ENCODE measurements at regions of chr6 and their contacts with region 1.

Region 1: GRCh38 chr6:1424306-1424928 is 35.0 kb downstream of the FOXF2 start:
- H3K4me3 ChIP-seq: no peak overlapping the region
- H3K27ac ChIP-seq: no peak overlapping the region; the same call in 1 of the 2 replicates
- H3K4me1 ChIP-seq: no peaks in the 10 kb centered on the region
- CTCF ChIP-seq: peak; percentile 59

Region 2: DNA sequence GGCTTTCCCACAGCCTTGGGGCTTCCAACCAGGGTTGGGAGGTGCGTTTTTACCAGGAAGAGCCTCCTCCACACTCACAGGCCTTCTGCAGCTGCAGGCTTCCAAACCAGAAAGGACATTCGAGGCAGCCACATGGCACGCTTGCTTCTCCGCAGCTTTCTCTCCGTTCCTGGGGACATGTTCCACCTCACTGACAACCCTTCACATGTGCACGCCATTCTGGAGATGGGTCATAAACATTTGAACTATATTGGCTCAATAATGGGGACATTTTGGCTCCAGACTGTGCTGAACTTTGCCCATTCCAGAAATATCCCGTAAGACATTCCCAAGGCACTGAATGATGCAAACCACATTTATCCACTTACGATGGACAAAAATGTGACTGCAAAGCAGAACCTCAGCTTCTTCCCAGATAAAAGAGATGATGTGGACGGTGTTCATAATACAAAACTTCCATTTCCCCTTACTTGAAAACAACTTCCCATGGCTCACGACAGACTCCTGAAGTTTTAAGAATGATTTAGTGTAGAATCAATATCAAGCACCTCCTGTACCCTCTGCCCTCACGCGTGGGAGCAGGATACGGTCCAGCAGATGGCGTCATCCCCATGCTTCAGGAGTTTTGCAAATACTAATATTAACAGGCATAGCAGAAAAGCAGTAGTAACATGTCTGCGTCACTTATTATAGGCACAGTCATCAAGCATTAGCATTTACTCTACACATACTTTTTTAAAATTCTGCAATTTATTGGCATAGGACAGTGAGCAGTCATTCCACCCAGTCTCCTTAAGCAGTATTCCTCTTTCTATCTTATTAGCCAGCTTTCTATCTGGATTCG is 60.5 kb before region 1 on chr6:
- CTCF ChIA-PET with region 1: interaction called, 18 read pairs
- POLR2A ChIA-PET with region 1: no interaction called
- H3K4me3 ChIP-seq: no peak overlapping the region
- H3K27ac ChIP-seq: no peak overlapping the region
- H3K4me1 ChIP-seq: no peaks in the 10 kb centered on the region
- CTCF ChIP-seq: peak; percentile 37; the same call in 1 of the 2 replicates

Region 3: GRCh38 chr6:1387876-1388629 is 36.4 kb before region 1 on chr6:
- CTCF ChIA-PET with region 1: interaction called, 11 read pairs
- POLR2A ChIA-PET with region 1: no interaction called
- H3K4me3 ChIP-seq: no peak overlapping the region
- H3K27ac ChIP-seq: peak overlapping the region; percentile 67
- H3K4me1 ChIP-seq: peaks cover 18% of the 10 kb centered on the region
- CTCF ChIP-seq: peak; percentile 62

Region 4: DNA sequence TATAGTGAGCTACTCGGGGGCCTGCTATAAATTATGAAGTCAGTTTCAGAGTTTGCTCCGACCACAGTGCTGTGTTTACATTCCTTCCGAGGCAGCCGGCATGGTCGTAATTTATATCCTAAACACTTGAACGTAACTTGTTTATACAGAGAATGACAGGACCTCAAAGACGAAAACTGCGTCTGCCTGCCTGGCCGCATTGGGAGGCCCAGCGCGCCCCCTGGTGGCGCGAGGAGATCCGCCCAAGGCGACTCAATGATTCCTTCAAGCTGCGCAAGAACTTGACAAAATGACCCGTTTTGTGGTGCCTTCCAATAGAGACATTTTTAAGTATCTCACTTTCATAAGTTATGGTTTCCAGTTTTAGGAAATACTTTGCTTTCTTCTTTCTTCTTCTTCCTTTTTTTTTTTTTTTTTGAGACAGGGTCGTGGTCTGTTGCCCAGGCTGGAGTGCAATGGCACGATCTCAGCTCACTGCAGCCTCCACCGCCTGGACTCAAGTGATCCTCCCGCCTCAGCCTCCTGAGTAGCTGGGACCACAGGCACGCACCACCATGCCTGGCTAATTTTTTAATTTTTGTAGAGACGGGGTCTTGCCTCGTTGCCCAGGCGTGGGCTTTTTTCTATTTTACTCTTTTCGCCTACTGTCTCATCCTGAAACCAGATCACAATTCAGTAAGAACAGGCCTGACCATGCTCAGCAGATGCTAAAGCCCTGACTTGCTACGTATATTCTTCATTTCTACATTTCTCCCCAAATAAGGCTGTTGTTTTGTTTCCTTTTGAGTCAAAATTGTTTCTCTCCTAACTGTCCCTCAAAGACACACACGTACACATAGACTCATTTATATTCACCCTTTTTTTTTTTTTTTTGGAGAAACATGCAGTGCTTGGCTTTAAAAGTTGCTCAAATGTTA is 27.2 kb before region 1 on chr6:
- CTCF ChIA-PET with region 1: interaction called, 35 read pairs
- POLR2A ChIA-PET with region 1: no interaction called
- H3K4me3 ChIP-seq: no peak overlapping the region
- H3K27ac ChIP-seq: no peak overlapping the region
- H3K4me1 ChIP-seq: peaks cover 12% of the 10 kb centered on the region
- CTCF ChIP-seq: peak; percentile 90

Region 5: DNA sequence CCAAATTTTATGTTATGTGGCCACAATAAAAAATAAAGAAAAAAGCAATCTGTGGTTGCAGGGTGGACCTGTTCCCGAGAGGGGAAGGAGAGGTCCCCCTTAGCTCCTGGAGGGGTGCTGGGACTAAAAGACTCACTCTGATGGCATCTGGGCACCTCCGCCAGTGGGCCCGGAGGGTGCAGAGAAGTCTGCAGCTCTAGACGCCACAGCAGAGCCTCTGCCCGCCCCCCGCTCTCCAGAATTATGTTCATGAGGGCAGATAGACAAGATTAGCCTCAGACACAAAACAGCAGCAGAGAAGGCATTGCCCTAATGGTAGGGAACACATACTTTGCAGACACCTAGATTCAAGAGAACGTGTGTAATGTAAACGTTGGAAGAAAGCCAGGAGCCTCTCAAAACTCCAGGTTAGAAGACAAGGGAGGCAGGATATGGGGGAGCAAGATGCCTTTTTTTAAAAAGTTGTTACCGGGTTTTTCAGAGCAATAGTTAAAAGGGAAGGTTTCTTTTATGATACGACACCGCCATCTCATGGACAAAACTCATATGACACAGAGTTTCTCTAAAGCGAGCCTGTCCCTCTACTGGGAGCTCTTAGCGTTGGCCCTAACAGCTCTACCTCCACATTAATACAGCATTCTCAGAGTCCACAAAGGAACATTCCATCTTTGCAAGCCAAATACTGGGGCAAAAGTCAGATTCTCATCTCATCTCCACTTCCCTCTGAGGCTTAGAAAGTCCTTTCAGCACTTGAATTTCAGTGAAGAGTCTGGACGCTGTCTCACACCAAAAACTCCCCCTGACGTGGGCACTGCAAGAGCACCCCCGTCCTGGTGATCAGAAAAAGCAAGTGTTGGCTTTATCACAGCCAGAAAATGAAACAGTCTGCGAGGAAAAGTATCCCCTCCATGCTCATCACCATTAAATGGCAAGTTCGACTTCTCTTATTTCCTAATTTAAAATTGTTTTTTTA is 12.2 kb after region 1 on chr6:
- CTCF ChIA-PET with region 1: interaction called, 31 read pairs
- POLR2A ChIA-PET with region 1: no interaction called
- H3K4me3 ChIP-seq: no peak overlapping the region
- H3K27ac ChIP-seq: no peak overlapping the region
- H3K4me1 ChIP-seq: peaks cover 4% of the 10 kb centered on the region
- CTCF ChIP-seq: peak; percentile 82

Measured in HEK293 (cell line).